Activated CD4-positive, alpha-beta T cell treated with anti-CD3 and anti-CD28 coated beads, Interleukin-2, amount 10 ng/mL, durations not matched to agents 24 days and 14 days (primary cell): ENCODE measurements at regions of chr6 and their contacts with region 1.

Region 1: DNA sequence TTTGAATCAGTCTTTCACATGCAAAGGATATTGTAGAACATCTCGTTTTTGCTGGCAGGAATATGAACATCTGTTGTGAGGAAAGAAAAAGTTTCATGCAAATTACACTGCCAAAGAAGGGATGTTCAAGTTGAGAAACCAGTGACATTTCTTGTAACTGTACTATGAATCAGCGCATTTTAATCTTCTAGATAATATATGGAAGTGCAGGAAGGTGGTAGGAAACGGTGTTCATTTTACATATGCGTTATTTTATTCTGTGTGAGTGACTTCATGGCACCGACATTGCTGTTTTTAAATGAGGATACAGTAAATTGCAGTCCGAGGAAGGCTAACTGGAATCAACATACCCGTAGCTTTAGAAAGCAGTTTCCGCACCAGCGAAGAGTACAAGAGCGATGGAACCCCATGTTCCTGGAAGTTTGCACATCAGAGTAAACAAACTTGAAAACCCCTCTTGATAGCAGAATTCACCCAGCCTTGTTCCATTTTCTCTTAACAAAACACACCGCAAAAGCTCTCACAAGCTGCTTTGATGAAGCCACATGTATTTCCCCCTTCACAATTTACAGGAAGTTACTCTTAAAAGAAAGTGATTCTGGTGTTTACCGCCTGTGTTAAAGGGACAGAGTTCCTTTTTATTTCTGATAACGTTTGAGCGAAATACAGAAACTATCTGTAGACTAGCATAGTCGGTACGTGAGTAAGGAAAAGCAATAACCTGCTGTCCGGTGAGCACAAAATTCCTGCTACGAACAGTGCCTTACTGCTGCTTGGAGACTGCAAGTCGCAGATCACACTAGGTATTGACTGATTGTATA is 11.5 kb downstream of the PRDM1 start:
- DNase-seq: peak; percentile 92
- H3K4me3 Mint-ChIP-seq: peak overlapping the region; percentile 91
- H3K27ac Mint-ChIP-seq: peak overlapping the region; percentile 97
- H3K4me1 Mint-ChIP-seq: peaks cover 75% of the 10 kb centered on the region
- H3K27me3 Mint-ChIP-seq: no peaks in the 10 kb centered on the region

Region 2: DNA sequence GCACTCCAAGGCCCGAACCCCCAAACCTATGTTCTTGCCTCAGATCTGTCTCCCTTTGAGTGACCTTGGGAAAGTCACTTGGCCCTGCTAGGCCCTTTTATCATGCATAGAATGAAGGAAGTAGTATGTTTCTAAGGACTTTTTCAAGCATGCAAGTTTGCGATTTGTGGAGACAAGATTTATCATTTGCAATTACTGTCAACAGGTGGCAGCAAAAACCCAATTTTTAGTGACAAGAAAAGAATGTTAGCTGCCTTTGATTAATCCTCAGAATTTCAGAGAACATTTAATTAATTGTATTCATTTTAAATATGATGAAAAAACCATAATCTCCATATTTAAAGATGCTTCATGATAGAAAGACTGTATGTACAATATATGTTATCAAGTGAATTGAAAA is 666.4 kb before region 1 on chr6:
- intact Hi-C with region 1: loop called (anchors 5 kb)
- DNase-seq: peak; percentile 80
- H3K4me3 Mint-ChIP-seq: no peak overlapping the region
- H3K27ac Mint-ChIP-seq: no peak overlapping the region
- H3K4me1 Mint-ChIP-seq: peaks cover 2% of the 10 kb centered on the region
- H3K27me3 Mint-ChIP-seq: peaks cover 31% of the 10 kb centered on the region

Region 3: DNA sequence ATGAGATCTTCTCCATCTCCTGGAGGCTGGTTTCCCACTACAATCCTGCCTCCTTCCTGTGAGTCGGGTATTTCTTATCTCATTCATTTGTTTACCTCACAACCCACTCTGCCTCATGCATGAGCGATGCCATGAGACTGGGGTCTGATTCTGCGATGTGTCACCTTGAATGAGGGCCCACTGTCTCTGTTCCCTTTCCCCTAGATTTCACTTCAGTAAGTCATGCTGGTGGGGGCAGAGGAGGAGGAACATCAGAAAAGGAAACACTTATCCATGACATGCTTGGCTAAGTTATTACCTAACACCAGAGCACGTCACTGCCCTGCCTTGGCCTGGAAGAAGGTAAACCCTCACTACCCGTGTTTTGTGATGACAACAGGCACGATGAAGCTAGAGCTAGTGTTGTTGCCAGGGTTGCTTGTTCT is 348.9 kb before region 1 on chr6:
- intact Hi-C with region 1: loop called (anchors 5 kb)
- DNase-seq: no peak
- H3K4me3 Mint-ChIP-seq: no peak overlapping the region
- H3K27ac Mint-ChIP-seq: peak overlapping the region; percentile 39
- H3K4me1 Mint-ChIP-seq: peaks cover 44% of the 10 kb centered on the region
- H3K27me3 Mint-ChIP-seq: peaks cover 3% of the 10 kb centered on the region

Region 4: DNA sequence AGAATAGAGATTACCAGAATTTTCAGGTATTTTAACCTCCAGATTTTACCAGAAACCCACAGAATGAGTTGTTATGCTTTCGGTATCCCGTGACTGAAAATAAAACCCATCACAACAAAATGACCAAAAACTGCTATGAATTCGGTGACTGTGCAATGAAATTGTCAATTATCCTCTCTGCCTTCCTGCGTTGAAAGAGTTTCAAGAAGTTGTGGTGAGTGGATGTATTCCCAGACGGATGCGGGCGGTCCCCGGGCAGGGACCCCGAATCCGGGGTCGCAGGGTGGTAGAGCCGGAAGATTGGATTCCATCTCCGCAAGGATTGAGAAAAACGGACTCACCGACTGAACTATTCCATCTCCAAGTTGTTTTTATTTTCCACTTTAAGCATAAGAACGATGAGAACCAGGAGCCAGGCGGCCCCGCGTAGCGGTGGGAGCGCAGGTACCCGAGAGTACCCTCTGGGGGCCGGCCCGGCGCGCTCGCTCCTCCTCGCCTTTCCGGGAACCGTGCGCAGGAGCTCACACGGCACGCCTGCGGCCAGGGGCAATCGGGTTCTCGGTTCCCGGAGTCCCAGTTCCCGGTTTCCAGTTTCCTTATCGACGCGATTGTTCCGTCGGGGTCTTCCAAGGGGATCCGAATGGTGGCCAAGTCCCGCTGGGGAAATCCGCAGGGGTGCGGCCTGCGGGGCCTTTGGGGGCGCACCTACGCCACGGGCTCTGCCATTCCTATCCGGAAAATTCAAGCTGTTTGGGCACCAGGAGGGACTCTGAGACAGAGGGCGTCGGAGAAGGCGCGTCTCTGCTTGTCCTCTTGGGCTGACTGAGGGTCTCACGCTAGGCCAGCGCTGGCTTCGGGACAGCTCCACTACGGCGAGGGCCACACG is 116.4 kb before region 1 on chr6:
- intact Hi-C with region 1: loop called (anchors 1 kb)
- DNase-seq: peak; percentile 86
- H3K4me3 Mint-ChIP-seq: peak overlapping the region; percentile 78
- H3K27ac Mint-ChIP-seq: peak overlapping the region; percentile 84
- H3K4me1 Mint-ChIP-seq: peaks cover 54% of the 10 kb centered on the region
- H3K27me3 Mint-ChIP-seq: peaks cover 6% of the 10 kb centered on the region

Region 5: DNA sequence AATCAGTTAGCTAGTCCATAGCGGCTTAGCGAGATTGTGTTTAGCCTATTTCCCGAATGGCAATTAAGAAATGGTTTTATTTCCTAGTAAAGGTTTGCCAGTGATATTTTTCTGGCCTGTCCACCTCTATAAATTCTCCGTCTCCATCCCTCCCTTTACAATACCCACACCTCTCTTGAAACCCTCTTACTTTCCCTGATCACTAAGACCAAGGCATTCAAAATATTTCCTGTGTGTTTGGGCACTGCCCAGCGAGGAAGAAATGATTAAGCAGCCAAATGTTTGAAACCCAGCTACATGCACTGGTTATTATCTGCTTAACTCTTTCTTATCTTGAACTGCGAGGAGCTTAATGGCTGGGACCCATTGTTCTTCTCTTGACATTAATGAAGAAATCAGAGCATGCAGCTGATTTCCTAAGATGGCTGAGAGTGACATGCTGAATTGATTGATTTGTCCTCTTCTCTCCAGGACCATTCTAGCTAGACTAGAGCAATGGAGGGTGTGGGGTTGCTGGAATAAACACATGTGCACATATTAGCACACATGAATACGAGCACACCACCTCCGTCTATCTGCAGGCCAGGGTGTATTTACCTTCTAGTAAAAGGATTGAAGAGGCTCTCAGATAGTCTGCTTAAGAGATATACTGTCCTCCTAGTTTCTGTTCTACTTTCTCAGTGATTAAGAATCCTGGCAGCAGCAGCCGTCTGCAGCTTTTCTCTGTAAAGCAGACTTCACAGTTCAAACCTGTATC is 57.6 kb before region 1 on chr6:
- intact Hi-C with region 1: no loop called
- DNase-seq: no peak
- H3K4me3 Mint-ChIP-seq: no peak overlapping the region
- H3K27ac Mint-ChIP-seq: no peak overlapping the region
- H3K4me1 Mint-ChIP-seq: peaks cover 9% of the 10 kb centered on the region
- H3K27me3 Mint-ChIP-seq: peaks cover 1% of the 10 kb centered on the region

Region 6: GRCh38 chr6:106141441-106142237 is 44.0 kb after region 1 on chr6:
- intact Hi-C with region 1: loop called (anchors 1 kb)
- DNase-seq: peak; percentile 85
- H3K4me3 Mint-ChIP-seq: peak overlapping the region; percentile 76
- H3K27ac Mint-ChIP-seq: peak overlapping the region; percentile 96
- H3K4me1 Mint-ChIP-seq: peaks cover 51% of the 10 kb centered on the region
- H3K27me3 Mint-ChIP-seq: no peaks in the 10 kb centered on the region

Region 7: DNA sequence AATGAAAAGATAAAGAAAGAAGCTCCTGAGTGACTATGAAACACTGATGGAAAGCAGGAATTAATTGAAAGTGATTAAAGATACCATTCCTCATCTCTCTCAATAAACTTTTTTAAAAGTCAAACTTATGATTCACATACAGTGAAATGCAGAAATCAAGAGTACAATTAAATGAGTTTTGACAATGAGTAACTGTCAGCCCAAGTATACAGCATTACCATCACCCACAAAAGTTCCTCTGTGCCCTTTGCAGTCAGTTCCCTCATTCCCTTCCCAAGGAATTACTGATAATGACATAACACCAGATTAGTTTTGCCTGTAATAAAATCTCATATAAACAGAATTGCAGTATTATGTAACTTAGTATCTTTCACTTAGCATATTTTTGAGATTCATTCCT is 183.5 kb after region 1 on chr6:
- intact Hi-C with region 1: loop called (anchors 5 kb)
- DNase-seq: no peak
- H3K4me3 Mint-ChIP-seq: no peak overlapping the region
- H3K27ac Mint-ChIP-seq: no peak overlapping the region
- H3K4me1 Mint-ChIP-seq: peaks cover 31% of the 10 kb centered on the region
- H3K27me3 Mint-ChIP-seq: no peaks in the 10 kb centered on the region